ENCODE measurements at regions of chr14 and their contacts with region 1.

Region 1: DNA sequence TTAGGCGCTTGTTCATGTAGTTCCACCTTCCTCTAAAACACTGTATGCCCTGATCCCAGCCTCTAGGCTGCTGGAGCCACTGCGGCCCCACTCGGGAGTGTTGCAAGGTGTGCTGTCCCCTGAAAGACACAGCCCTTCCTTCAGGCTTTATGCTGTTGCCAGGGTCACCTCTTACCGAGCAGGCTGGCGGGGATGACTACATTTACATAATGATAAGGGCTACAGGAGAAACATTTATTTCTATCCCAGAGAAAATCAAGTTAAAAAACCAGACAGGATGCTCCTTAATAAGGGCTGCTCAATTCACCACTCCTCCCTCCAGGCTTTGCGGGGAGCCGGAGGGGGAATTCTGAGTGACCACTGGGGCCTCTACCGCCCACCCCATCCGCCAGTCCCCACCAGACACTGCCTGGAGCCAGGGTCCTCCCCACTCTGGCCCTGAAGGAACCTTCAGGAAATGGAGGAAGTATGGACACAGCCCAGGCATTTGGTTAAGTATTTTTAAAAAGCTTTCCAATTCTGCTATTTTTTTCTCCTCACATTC is 200.6 kb downstream of the TTC7B start:
- DNase-seq: peak; percentile 78
- H3K4me3 ChIP-seq: peak overlapping the region in 2 of 3 experiments; percentile 19 to 38
- H3K27ac ChIP-seq: peak overlapping the region; percentile 93
- H3K4me1 ChIP-seq: peaks cover 71% of the 10 kb centered on the region
- H3K27me3 ChIP-seq: no peaks in the 10 kb centered on the region
- CTCF ChIP-seq: no peak
- POLR2A ChIP-seq: no peak

Region 2: DNA sequence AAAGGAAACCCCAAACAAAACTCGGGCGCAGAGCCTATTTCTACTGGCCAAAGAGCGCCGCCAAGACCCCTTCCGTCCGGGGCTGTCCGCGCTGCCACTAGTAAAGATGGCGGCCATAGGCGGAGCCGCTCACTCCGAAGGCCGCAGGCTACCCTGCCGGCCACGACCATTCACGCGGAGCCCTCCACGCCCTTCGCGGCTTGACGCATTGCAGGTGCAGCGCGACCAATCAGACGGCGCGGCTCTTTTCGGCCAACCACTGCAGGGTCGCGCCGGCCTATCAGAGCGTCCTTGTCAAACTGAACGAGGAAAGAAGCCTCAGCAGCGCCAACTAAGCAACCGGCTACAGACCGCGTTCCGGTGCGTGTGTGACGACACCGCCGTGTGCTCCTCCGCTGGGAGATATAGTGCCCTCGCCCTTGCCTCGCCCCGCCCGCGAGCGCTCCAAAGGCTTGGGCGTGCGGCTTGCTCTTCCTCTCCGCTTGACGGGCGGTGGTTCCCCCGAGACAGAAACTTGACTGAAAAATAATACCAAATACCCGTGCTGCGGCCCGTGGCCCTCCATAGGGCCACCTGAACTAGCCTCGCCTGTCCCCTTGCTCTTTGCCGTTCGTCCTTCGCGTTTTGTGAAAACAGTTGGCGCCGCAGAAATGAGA is 232.4 kb before region 1 on chr14:
- CTCF ChIA-PET with region 1: no interaction called
- POLR2A ChIA-PET with region 1: no interaction called
- dilution Hi-C with region 1: no loop called
- intact Hi-C with region 1: loop called (anchors 5 kb)
- DNase-seq: peak; percentile 100
- H3K4me3 ChIP-seq: peak overlapping the region; percentile 47 to 70 (median 58)
- H3K27ac ChIP-seq: peak overlapping the region; percentile 97
- H3K4me1 ChIP-seq: peaks cover 17% of the 10 kb centered on the region
- H3K27me3 ChIP-seq: peaks cover 0 to 2% of the 10 kb centered on the region in 2 experiments
- CTCF ChIP-seq: no peak
- POLR2A ChIP-seq: peak; percentile 77

Region 3: DNA sequence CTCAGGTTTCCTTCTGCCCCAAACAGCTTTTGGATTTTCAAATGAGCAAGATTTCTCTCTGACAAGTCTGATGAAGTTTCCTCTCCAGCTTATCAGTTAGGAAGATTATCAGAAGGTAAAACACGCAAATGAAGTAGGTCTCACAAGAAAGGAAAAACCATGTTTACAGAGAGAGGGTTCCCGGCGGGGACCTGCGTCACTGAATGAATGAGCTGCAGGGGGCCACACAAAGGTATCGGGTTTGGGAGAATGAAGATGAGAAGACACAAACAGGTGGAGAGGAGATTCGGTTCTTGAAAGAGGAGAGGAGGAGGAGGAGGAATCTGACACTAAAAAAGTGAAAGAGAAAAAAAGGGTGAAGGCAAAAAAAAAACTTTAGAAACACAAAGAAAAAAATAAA is 10.2 kb before region 1 on chr14:
- CTCF ChIA-PET with region 1: interaction called, 5 read pairs
- POLR2A ChIA-PET with region 1: no interaction called
- dilution Hi-C with region 1: no loop called
- intact Hi-C with region 1: loop called (anchors 1 kb)
- DNase-seq: no peak
- H3K4me3 ChIP-seq: no peak overlapping the region
- H3K27ac ChIP-seq: no peak overlapping the region
- H3K4me1 ChIP-seq: peaks cover 3% of the 10 kb centered on the region
- H3K27me3 ChIP-seq: no peaks in the 10 kb centered on the region
- CTCF ChIP-seq: no peak
- POLR2A ChIP-seq: no peak

Region 4: GRCh38 chr14:90642244-90642717 is 26.7 kb after region 1 on chr14:
- CTCF ChIA-PET with region 1: no interaction called
- POLR2A ChIA-PET with region 1: no interaction called
- dilution Hi-C with region 1: no loop called
- intact Hi-C with region 1: loop called (anchors 2 kb)
- DNase-seq: peak; percentile 81
- H3K4me3 ChIP-seq: no peak overlapping the region
- H3K27ac ChIP-seq: no peak overlapping the region
- H3K4me1 ChIP-seq: no peaks in the 10 kb centered on the region
- H3K27me3 ChIP-seq: no peaks in the 10 kb centered on the region
- CTCF ChIP-seq: no peak
- POLR2A ChIP-seq: no peak

Measured in endothelial cell of umbilical vein (primary cell).